ENCODE measurements at regions of chr22 and their contacts with region 1.

Region 1: GRCh38 chr22:31790240-31790639 is 36.4 kb downstream of the DEPDC5 start:
- DNase-seq: peak; percentile 67
- ATAC-seq: peak; percentile 82
- H3K4me3 ChIP-seq: peak overlapping the region in 1 of 5 experiments; percentile 11
- H3K4me3 Mint-ChIP-seq: peak overlapping the region; percentile 74
- H3K27ac ChIP-seq: peak overlapping the region; percentile 8 to 64
- H3K27ac Mint-ChIP-seq: peak overlapping the region; percentile 80
- H3K4me1 ChIP-seq: peaks cover 24 to 35% of the 10 kb centered on the region in 2 donors
- H3K4me1 Mint-ChIP-seq: peaks cover 35% of the 10 kb centered on the region
- H3K27me3 ChIP-seq: no peaks in the 10 kb centered on the region
- H3K27me3 Mint-ChIP-seq: no peaks in the 10 kb centered on the region
- CTCF ChIP-seq: no peak

Region 2: DNA sequence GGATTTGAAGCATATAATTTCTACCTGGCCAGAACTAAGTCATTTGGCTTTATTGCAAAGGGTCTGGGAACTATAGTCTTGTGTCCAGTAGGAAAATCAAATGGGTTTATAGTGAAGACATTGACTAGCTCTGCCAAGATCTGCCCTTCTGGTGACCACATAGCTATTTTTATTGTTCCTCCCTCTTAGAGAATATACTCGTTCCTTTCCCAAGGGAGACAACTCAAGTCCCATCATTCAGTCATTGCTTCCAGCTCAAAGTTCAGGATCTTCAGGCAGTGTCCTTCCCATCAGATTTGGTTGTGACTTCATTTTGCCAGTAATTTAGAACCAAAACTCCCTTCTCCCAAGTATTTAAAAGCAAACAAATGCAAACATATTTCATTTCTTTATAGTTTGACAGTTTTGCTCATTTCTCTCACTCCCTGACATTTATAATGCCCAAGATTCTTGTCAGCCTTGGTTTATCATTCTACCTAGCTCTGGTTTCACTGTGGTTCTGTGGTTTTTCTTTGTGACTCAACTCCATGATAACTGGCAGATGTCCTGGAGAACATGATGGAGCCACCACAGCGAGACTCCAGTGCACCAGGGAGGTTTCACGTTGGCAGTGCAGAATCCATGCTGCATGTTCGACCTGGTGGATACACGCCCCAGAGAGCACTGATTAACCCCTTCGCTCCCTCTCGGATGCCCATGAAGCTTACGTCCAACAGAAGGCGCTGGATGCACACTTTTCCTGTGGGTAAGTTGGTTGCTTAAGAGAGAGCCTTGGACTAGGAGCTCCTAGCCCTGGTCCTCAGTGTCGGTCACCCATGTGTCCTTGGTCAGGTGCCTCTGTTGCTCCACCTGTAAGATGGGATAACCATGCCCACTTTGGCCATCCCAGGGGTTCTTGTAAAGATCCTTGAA is 28.5 kb after region 1 on chr22:
- CTCF ChIA-PET with region 1: no interaction called
- POLR2A ChIA-PET with region 1: no interaction called
- intact Hi-C with region 1: no loop called
- DNase-seq: no peak
- ATAC-seq: no peak
- H3K4me3 ChIP-seq: no peak overlapping the region
- H3K4me3 Mint-ChIP-seq: no peak overlapping the region
- H3K27ac ChIP-seq: no peak overlapping the region
- H3K27ac Mint-ChIP-seq: no peak overlapping the region
- H3K4me1 ChIP-seq: no peaks in the 10 kb centered on the region
- H3K4me1 Mint-ChIP-seq: peaks cover 2% of the 10 kb centered on the region
- H3K27me3 ChIP-seq: no peaks in the 10 kb centered on the region
- H3K27me3 Mint-ChIP-seq: no peaks in the 10 kb centered on the region
- CTCF ChIP-seq: no peak

Region 3: DNA sequence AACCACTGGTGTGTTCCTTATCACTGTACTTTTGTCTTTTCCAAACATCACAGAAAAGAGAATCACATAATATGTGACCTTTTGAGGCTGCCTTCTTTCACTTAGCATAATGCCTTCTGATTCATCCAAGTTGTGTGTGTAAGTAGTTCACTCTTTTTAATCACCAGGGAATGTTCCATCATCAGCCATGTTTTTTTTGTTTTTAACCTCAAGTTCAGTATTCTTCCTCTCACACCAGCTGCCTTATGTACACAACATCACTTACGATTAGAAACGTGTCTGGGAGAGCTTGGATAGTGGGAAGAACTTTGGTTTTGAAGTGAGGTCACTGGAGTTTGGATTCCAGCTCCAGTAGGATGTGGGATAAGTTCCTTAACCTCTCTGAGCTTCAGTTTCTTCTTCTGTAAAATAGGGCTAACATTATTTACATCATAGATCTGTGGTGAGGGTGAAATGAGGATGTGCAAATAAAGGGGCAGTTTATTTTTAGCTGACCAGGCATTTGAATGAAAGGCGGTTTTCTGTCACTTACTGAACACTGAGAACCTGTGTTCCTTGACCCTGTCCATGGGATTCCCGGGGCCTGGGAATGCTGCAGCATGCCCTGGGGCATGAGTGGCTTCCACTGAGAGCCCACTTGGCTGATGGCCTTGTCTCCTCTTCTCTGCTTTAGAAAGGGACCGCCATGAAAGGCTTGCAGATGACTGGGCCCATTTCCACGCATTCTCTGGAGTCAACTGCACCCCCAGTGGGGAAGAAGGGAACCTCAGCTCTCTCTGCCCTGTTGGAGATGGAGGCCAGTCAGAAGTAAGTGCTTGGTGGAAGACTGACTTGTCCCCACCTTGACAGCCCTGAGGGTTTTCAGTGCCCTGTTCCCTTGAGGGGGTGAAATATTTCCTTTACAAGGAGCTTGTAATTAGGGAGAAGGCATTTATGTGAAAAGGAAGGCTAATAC is 56.2 kb after region 1 on chr22:
- CTCF ChIA-PET with region 1: no interaction called
- POLR2A ChIA-PET with region 1: no interaction called
- intact Hi-C with region 1: no loop called
- DNase-seq: no peak
- ATAC-seq: no peak
- H3K4me3 ChIP-seq: no peak overlapping the region
- H3K4me3 Mint-ChIP-seq: no peak overlapping the region
- H3K27ac ChIP-seq: no peak overlapping the region
- H3K27ac Mint-ChIP-seq: peak overlapping the region; percentile 13
- H3K4me1 ChIP-seq: peaks cover 0 to 12% of the 10 kb centered on the region in 2 donors
- H3K4me1 Mint-ChIP-seq: peaks cover 10% of the 10 kb centered on the region
- H3K27me3 ChIP-seq: no peaks in the 10 kb centered on the region
- H3K27me3 Mint-ChIP-seq: no peaks in the 10 kb centered on the region
- CTCF ChIP-seq: peak; percentile 29

Region 4: DNA sequence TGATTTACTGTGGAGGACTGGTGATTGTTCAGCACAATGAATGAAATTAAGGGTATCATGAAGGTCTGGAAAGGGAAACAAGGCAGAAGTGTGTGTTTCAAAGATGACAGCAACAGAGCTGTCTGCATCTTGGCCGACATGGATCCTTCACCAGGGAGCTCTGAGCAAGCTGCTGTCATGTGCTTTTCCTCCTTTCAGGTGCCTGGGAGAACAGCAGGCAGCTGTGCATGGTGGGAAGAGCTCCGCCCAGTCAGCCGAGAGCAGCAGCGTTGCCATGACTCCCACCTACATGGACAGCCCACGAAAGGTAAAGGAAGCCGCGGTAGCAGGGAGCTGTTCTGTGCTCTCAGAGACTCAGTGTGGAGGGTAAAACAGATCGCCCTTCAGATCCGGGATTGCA is 67.0 kb after region 1 on chr22:
- CTCF ChIA-PET with region 1: no interaction called
- POLR2A ChIA-PET with region 1: interaction called, 11 read pairs
- intact Hi-C with region 1: no loop called
- DNase-seq: no peak
- ATAC-seq: no peak
- H3K4me3 ChIP-seq: no peak overlapping the region
- H3K4me3 Mint-ChIP-seq: no peak overlapping the region
- H3K27ac ChIP-seq: no peak overlapping the region
- H3K27ac Mint-ChIP-seq: no peak overlapping the region
- H3K4me1 ChIP-seq: no peaks in the 10 kb centered on the region
- H3K4me1 Mint-ChIP-seq: no peaks in the 10 kb centered on the region
- H3K27me3 ChIP-seq: no peaks in the 10 kb centered on the region
- H3K27me3 Mint-ChIP-seq: no peaks in the 10 kb centered on the region
- CTCF ChIP-seq: no peak

Measured in B cell (primary cell).